ENCODE measurements at regions of chr15 and their contacts with region 1.

Region 1: DNA sequence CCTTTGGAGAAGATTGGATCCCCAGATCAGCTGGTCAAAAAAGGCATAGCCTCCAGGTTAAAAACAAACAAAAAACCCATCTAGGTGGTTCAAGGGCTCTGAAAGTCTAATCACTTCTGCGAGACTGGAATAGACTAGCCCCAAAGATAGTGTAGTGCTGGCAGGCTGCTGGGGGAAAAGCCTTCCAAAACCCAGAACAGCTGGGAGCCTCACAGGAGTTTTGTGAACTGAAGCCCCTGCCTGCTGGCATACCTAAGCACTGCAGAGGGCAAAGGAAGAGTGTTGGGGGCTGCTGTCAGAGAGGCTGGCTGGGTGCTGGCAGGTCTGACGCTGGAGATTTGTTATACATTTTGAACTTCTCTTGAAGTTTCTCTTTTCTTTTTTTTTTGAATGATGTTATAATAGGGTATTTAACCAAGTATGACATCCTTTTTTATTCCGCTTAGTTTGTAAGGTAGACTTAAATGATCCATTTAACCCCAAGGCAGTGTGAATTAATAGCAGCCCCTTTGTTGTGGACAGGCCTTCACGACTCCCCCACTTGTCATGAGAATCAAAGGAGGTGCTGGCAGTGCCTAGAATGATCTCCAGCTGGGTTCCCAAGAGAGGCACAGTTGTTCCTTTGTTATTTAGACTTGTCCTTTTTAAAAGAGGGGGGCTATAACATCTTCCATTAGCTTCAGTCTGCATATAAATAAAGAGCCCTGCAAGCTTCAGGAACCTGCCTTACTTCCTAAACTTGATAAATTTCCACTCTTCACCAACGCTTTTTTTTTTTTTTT is 53.9 kb downstream of the CRTC3 start:
- DNase-seq: no peak
- ATAC-seq: no peak
- H3K4me3 ChIP-seq: no peak overlapping the region
- H3K27ac ChIP-seq: no peak overlapping the region
- H3K4me1 ChIP-seq: no peaks in the 10 kb centered on the region
- H3K27me3 ChIP-seq: no peaks in the 10 kb centered on the region
- CTCF ChIP-seq: no peak

Region 2: DNA sequence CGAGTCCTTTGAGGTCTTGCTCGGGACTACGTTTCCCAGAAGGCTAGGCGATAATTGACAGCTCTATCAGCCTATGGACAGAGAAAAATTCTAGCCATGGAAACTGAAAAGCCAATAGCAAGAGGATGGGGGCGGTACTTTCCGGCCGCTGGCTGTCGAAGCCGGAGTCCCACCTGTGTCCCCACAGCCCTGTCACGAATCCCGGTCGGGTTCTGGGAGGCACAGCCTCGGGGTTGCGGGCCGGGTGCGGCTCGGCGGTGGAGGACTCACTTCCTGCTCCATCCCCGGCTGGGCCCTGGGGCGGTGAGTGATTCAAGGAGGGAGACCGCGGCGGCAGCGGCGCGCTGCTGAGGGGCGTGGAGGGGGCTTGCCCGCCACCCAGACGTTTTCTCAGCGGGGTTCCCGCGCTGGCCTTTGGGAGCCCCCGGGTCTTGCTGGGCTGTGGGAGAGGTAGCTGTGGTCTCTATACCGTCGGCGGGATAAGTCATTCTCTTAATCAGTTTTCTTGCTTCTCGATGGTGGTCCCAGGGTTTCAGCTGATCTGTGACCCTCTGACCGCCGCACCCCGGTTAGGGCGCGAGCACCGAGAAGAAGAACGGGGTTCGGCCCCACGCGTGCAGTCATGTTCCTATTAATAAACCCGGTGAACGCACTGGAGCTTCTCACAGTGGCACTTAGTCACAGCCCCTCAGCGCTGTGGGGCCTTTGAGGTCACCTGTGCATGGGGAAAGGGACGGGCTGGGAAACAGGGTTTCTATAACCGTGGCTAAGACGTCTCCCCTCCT is 231.4 kb before region 1 on chr15 and contains the start of gene ZNF774:
- CTCF ChIA-PET with region 1: no interaction called
- POLR2A ChIA-PET with region 1: interaction called, 10 read pairs
- in situ Hi-C with region 1: no loop called
- intact Hi-C with region 1: no loop called
- DNase-seq: peak; percentile 94
- ATAC-seq: peak; percentile 99
- H3K4me3 ChIP-seq: peak within 1 kb of the TSS; percentile 79 to 85
- H3K27ac ChIP-seq: peak within 1 kb of the TSS; percentile 55
- H3K4me1 ChIP-seq: peaks cover 10% of the 10 kb centered on the region
- H3K27me3 ChIP-seq: no peaks in the 10 kb centered on the region
- CTCF ChIP-seq: no peak
- total RNA-seq, gene ZNF774: 5.2 TPM

Region 3: DNA sequence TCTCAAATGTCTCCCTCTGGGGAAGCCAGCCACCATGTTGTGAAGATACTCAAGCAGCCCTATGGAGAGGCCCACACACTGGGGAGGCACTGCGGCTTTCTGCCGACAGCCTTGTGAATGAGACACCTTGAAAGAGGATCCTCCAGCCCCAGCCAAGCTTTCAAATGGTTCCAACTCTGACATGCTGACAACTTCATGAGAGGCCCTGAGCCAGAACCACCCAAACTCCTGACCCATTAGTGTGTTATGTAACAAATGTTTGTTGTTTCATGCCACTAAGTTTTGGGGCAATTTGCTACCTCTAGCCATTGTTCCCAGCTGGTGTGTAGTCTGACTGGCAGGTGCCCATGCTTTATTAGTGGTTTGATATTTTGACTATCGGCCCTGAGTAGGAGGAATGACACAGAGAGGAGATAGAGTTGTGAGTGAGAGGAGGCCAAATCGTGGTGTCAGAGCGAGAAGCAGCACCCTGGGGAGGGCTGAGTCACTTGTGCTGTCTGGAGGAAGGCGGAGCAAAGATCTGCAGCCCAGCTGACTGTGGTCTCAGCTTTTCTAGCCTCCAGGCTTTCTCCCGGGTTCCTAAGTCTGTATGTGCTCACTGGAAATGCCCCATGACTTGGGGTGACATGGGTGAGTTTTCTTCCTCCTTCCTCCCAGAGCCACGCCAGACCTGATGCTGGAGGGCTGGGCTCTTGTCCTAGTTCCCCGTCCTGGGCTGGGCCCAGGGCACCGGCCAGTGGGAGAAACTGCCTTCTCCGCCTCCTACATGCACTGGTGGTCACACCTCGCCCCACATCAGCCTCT is 76.7 kb after region 1 on chr15:
- CTCF ChIA-PET with region 1: no interaction called
- POLR2A ChIA-PET with region 1: no interaction called
- in situ Hi-C with region 1: no loop called
- intact Hi-C with region 1: no loop called
- DNase-seq: no peak
- ATAC-seq: peak; percentile 57
- H3K4me3 ChIP-seq: no peak overlapping the region
- H3K27ac ChIP-seq: no peak overlapping the region
- H3K4me1 ChIP-seq: no peaks in the 10 kb centered on the region
- H3K27me3 ChIP-seq: peaks cover 3% of the 10 kb centered on the region; the same call in 1 of the 2 replicates
- CTCF ChIP-seq: no peak